ENCODE measurements at regions of chr20 and their contacts with region 1.

Region 1: DNA sequence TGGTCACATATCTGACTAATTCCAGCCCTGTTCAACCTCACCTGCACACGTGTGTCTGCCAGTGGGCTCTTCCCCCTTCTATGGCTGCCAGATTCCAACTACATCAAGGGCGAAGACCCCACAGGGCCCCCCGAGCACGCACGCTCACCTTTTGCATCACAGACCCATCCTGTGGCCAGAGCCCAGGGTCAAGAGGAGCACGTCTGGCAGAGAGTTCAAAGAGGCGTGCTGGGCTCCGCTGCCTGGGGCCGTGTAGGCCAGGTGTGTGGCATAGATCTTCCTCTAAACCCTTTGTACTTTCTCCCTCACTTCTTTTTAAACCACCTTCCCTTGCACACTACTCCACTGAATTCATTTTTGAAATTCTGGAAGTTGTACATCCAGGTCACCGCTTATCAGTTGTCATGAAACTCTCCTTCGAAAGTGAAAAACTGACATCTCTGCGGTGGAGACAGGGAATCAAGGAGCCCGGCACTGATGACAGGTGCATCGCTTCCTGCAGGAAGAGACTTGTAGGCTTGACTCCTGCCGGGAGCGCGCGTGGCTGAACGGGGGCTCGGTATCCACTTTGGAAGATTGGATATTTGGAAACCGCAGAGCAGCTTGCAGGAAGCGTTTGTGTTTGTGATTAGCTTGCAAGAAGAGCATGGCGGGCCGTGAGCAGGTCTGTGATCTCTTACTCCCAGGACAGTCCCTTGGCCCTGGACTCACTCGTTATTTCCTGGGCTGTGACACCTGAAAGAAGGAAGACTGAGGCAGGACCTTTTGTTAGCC is 397.2 kb downstream of the CDH4 start:
- DNase-seq: no peak
- H3K4me3 ChIP-seq: no peak overlapping the region
- H3K27ac ChIP-seq: no peak overlapping the region
- H3K4me1 ChIP-seq: peaks cover 0 to 3% (median 2%) of the 10 kb centered on the region in 4 experiments; a peak in 3 of 7 replicates
- H3K27me3 ChIP-seq: peaks cover 0 to 1% (median 0%) of the 10 kb centered on the region in 4 experiments; a peak in 3 of 7 replicates
- CTCF ChIP-seq: no peak
- EP300 ChIP-seq: no peak
- POLR2A ChIP-seq: no peak
- RAD21 ChIP-seq: no peak

Region 2: DNA sequence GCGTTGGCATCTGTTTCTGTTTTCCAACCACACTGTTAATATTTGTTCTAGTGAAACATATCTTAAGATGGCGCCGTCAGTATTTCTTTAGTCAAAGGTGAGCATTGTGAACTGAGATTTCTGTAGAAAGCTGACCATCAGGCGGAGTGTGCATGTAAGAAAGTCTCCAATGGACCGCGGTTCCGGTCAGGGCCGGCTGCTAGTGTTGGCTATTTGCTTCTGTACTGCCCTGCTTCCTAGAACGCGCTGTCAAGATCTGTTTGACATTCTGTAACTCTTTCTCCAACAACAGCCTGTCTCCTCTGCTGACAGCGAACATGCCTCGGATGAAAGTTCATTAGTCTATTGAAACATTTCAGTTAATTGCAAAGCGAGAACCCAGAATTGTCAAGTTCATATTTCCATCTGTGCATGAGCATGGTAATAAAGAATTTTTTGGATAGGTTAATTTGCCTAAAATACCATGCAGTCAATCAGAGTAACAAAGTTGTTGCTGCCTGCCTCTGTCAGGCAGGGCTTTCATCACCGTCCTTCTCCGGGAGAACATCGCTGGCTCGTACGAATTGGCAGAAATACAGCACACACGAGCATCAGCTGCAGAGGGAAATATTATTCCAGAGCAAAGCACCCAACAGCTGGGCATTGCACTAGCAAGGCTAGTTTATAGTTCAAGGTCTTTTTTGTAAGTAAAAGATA is 28.1 kb before region 1 on chr20:
- CTCF ChIA-PET with region 1: no interaction called
- POLR2A ChIA-PET with region 1: no interaction called
- DNase-seq: no peak
- H3K4me3 ChIP-seq: no peak overlapping the region
- H3K27ac ChIP-seq: no peak overlapping the region
- H3K4me1 ChIP-seq: no peaks in the 10 kb centered on the region
- H3K27me3 ChIP-seq: peaks cover 0 to 8% (median 2%) of the 10 kb centered on the region in 4 experiments; a peak in 3 of 7 replicates
- CTCF ChIP-seq: no peak
- EP300 ChIP-seq: no peak
- POLR2A ChIP-seq: no peak
- RAD21 ChIP-seq: no peak

Region 3: DNA sequence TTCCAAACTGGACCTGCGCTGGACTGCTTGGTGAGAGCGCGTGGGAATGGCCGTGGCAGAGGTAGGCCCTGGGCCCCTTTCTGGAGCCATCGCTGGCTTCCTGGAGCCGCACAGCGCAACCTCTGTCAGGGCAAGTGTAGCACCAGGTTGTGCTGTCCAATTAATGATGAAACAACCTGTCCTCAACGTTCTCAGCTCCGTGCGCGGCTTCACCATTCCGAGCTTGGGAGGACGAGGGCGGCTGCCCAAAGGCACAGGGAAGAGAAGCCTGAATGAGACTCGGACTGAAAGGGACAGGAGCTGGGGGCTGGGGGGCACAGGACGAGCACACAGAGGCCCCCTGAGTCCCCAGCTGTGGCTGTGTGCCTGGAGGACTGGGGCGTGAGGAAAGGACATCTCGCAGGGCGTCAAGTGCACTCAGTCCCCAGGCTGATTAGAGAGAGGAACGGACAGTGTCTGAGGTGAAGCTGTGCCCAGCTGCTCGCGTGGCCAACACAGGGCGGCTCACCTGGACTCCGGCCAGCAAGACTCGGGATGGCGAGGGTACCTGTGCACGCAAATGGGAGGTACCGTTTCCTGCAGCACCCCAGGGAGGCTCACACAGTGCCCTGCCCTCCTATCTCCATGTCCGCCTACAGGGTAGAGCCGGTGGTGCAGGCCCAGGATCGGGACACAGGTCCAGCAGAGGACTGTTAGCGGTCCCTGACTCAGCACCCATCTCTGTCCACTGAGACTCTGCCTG is 13.1 kb after region 1 on chr20:
- CTCF ChIA-PET with region 1: interaction called, 14 read pairs
- POLR2A ChIA-PET with region 1: no interaction called
- DNase-seq: peak in 1 of 2 experiments; percentile 77
- H3K4me3 ChIP-seq: no peak overlapping the region
- H3K27ac ChIP-seq: no peak overlapping the region
- H3K4me1 ChIP-seq: peaks cover 0 to 5% (median 0%) of the 10 kb centered on the region in 4 experiments; a peak in 2 of 7 replicates
- H3K27me3 ChIP-seq: peaks cover 0 to 2% (median 0%) of the 10 kb centered on the region in 4 experiments; a peak in 2 of 7 replicates
- CTCF ChIP-seq: peak; percentile 41 to 76 (median 74); a peak in 3 of 4 replicates
- EP300 ChIP-seq: no peak
- POLR2A ChIP-seq: no peak
- RAD21 ChIP-seq: peak; percentile 46 to 47

Region 4: GRCh38 chr20:61803915-61804804 is 154.9 kb after region 1 on chr20:
- CTCF ChIA-PET with region 1: no interaction called
- POLR2A ChIA-PET with region 1: no interaction called
- DNase-seq: no peak
- H3K4me3 ChIP-seq: no peak overlapping the region
- H3K27ac ChIP-seq: no peak overlapping the region
- H3K4me1 ChIP-seq: peaks cover 0 to 2% (median 0%) of the 10 kb centered on the region in 4 experiments; a peak in 2 of 7 replicates
- H3K27me3 ChIP-seq: peaks cover 0 to 5% (median 2%) of the 10 kb centered on the region in 4 experiments; a peak in 3 of 7 replicates
- CTCF ChIP-seq: no peak
- EP300 ChIP-seq: no peak
- POLR2A ChIP-seq: no peak
- RAD21 ChIP-seq: no peak

Measured in H1 (cell line).